ENCODE measurements at regions of chr17 and their contacts with region 1.

Region 1: DNA sequence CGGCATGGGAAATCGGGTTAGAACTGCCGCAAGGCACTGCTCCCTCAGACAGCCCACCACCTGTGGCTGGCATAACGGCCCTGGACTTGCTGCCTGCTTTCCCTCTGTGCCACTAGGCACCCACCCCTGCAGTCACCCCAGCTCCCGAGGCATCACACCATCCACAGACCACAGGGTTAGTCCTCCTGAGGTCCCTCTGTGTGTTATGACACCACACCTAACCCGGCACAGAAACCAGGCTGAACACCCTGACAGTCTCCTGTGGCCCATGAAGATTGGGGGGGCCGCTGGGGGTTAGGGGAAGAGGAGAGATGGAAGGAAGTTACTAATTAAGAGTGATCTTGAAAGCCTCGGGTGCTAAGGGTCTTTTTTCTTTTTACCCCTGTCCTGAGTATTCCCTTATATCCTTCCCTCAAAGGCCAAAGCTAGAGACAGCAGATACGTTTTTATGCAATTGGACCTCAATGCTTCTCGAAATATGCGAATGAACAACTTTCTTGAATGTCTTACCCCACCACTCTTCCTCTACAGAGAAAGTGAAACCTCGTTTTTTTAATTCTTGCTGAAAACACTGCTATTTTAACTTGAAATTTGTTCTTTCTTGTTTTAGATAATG is 7.0 kb downstream of the CYTH1 start:
- DNase-seq: peak in 34 of 35 experiments; percentile 26 to 71 (median 56)
- ATAC-seq: peak; percentile 50 to 59 (median 55)
- H3K4me3 ChIP-seq: peak overlapping the region; percentile 43 to 62
- H3K4me3 Mint-ChIP-seq: peak overlapping the region; percentile 83 to 97 (median 84)
- H3K27ac ChIP-seq: peak overlapping the region; percentile 81
- H3K27ac Mint-ChIP-seq: peak overlapping the region; percentile 96 to 97
- H3K4me1 ChIP-seq: peaks cover 46 to 86% of the 10 kb centered on the region in 2 experiments
- H3K4me1 Mint-ChIP-seq: peaks cover 71 to 75% (median 74%) of the 10 kb centered on the region in 3 donors
- H3K27me3 ChIP-seq: no peaks in the 10 kb centered on the region
- H3K27me3 Mint-ChIP-seq: no peaks in the 10 kb centered on the region

Region 2: DNA sequence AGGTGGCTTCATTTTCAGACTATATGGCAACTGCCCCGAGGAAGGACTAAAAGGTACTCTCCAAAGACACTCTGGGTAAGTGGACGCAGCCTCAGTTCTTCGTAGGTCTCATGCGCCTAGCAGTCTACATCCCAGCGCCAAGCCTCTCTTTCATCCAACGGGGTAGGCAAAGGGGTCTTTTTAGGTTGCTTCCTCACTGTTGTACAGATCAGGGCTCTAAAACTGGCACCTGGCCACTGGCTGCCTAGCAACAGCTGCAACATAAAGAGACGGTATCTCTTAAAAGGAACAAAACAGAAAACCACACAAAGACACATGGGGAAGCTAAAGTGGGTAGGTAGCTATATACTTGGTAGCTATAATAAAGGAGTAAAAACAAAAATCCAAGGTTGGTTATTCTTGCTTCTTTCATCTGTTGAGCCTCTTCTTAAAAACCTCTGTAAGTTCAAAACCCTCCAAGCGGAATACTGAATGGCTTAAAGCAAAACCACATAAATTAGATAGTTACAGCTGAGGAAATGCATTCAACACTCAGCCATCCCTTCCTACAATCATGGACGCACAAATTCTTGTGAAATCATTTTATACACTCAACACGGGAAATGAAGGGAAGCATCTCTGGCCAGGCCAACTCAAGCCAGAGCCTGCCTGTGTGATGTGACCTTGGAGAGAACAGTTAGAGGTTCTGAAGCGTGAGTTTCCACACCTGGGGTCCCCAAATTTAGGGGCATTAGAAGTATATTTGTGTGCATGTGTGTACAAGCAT is 15.7 kb before region 1 on chr17:
- CTCF ChIA-PET with region 1: interaction called in 1 of 2 experiments, 9 read pairs
- POLR2A ChIA-PET with region 1: interaction called, 12 to 23 read pairs
- DNase-seq: peak; percentile 57 to 94 (median 89)
- ATAC-seq: peak; percentile 89 to 95 (median 93)
- H3K4me3 ChIP-seq: peak overlapping the region; percentile 16 to 39
- H3K4me3 Mint-ChIP-seq: peak overlapping the region; percentile 60 to 70 (median 66)
- H3K27ac ChIP-seq: peak overlapping the region; percentile 95
- H3K27ac Mint-ChIP-seq: peak overlapping the region; percentile 92 to 94
- H3K4me1 ChIP-seq: peaks cover 56 to 85% of the 10 kb centered on the region in 2 experiments
- H3K4me1 Mint-ChIP-seq: peaks cover 83 to 89% (median 84%) of the 10 kb centered on the region in 3 donors
- H3K27me3 ChIP-seq: no peaks in the 10 kb centered on the region
- H3K27me3 Mint-ChIP-seq: no peaks in the 10 kb centered on the region